Adrenal gland (tissue), 19 donors: ENCODE measurements at regions of chr7 and their contacts with region 1.

Region 1: GRCh38 chr7:117698018-117698417 is 175.2 kb downstream of the CTTNBP2 start:
- DNase-seq: no peak
- H3K4me3 ChIP-seq: no peak overlapping the region
- H3K27ac ChIP-seq: no peak overlapping the region
- H3K4me1 ChIP-seq: no peaks in the 10 kb centered on the region
- H3K27me3 ChIP-seq: no peaks in the 10 kb centered on the region
- CTCF ChIP-seq: no peak
- POLR2A ChIP-seq: no peak

Region 2: DNA sequence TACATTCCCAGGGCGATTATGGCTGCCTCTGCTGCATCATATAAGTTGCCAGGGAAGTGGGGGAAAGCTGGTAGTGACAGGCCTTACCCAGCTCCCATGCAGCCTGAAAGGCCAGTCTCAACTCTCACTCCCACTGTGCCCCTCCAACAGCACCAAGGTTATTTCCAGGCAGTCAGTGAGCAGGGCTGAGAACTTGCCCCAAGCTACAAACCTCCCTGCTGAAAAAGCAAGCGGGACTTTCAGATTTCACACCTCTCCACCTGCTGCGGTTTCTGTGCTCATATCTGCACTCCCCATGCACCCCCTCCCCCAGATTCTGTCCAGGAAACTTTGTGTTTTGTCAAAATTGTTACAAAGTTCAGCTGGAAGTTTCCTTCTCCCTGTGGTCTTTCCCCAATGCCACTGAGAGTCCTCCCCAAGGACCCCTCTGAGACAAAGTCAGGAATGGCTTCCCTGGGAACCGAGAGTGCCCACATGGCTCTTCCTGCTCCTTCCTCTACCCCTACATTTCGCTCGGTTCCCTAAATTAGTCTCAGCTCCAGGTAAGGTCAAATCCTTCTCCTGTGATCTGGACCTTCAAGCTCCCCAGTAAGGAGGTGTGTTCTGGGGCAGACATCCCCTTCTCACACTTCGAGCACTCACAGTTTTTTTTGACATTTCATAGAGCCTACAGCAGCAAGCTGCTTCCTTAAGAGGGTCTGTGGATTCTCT is 349.9 kb before region 1 on chr7:
- intact Hi-C with region 1: loop called in 1 of 2 experiments (anchors 5 kb)
- DNase-seq: no peak
- H3K4me3 ChIP-seq: no peak overlapping the region
- H3K27ac ChIP-seq: no peak overlapping the region
- H3K4me1 ChIP-seq: no peaks in the 10 kb centered on the region
- H3K27me3 ChIP-seq: peaks cover 2% of the 10 kb centered on the region
- CTCF ChIP-seq: no peak
- POLR2A ChIP-seq: no peak

Region 3: DNA sequence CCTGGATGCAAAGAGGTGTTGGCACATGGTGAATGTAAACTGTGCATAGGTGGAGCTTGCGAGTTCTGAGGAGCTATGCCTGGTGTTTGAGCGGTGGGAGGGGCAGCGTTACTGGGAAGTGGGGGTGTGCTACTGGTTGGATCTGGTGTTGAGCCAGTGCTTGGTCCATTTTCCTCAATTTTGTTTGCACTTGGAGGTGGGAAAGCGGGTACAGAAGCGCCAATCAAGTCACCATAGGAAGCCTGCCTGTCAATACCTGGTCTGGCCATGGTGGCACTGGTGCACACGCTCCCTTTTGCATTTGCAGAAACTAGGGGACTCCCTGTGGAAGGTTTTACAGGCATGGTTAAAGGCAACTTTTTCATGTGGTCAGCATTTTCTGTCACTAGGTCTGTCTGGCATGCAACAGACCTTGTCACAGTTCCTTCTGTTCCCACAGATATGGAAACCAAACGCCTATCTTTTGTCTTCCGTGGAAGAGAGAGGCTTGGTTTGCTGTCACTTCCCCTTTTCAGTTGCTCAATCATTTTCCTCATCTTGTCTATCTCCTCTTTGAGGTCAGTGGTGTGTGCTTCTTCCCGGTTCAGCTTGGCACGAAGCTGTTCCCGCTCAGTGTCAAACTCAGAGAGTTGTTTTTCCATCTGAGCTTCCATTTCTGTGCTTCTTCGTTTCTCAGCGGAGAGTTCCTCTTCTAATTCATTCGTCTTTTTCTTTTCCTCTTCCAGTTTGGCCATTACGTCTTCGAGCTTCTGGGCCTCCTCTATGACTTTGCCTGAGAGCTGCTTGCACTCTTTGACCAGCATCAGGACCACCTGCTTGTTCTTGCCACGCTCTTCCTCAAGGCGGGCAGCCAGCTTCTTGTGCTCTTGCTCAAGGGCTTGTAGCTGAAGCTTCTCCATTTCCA is 94.1 kb after region 1 on chr7:
- intact Hi-C with region 1: no loop called
- DNase-seq: peak in 2 of 7 donors; percentile 34 to 36
- H3K4me3 ChIP-seq: no peak overlapping the region
- H3K27ac ChIP-seq: peak overlapping the region in 3 of 5 donors; percentile 27 to 73 (median 57)
- H3K4me1 ChIP-seq: no peaks in the 10 kb centered on the region
- H3K27me3 ChIP-seq: no peaks in the 10 kb centered on the region
- CTCF ChIP-seq: no peak
- POLR2A ChIP-seq: no peak

Region 4: GRCh38 chr7:118648002-118648401 is 950.0 kb after region 1 on chr7:
- intact Hi-C with region 1: no loop called
- DNase-seq: no peak
- H3K4me3 ChIP-seq: no peak overlapping the region
- H3K27ac ChIP-seq: no peak overlapping the region
- H3K4me1 ChIP-seq: no peaks in the 10 kb centered on the region
- H3K27me3 ChIP-seq: no peaks in the 10 kb centered on the region
- CTCF ChIP-seq: no peak
- POLR2A ChIP-seq: no peak